ENCODE measurements at regions of chr3 and their contacts with region 1.

Region 1: GRCh38 chr3:153161138-153161713 is 800 bp upstream of the RAP2B start:
- DNase-seq: peak; percentile 100
- H3K4me3 ChIP-seq: peak overlapping the region; percentile 72
- H3K27ac ChIP-seq: peak overlapping the region; percentile 76
- H3K4me1 ChIP-seq: peaks cover 25% of the 10 kb centered on the region
- H3K27me3 ChIP-seq: no peaks in the 10 kb centered on the region
- CTCF ChIP-seq: no peak

Region 2: GRCh38 chr3:151638555-151639417 is 1522.4 kb before region 1 on chr3:
- CTCF ChIA-PET with region 1: no interaction called
- POLR2A ChIA-PET with region 1: no interaction called
- intact Hi-C with region 1: no loop called
- DNase-seq: no peak
- H3K4me3 ChIP-seq: no peak overlapping the region
- H3K27ac ChIP-seq: no peak overlapping the region
- H3K4me1 ChIP-seq: no peaks in the 10 kb centered on the region
- H3K27me3 ChIP-seq: no peaks in the 10 kb centered on the region
- CTCF ChIP-seq: no peak

Region 3: GRCh38 chr3:152843955-152844354 is 317.3 kb before region 1 on chr3:
- CTCF ChIA-PET with region 1: no interaction called
- POLR2A ChIA-PET with region 1: no interaction called
- intact Hi-C with region 1: no loop called
- DNase-seq: no peak
- H3K4me3 ChIP-seq: no peak overlapping the region
- H3K27ac ChIP-seq: no peak overlapping the region
- H3K4me1 ChIP-seq: no peaks in the 10 kb centered on the region
- H3K27me3 ChIP-seq: no peaks in the 10 kb centered on the region
- CTCF ChIP-seq: no peak

Region 4: GRCh38 chr3:153043729-153044328 is 117.4 kb before region 1 on chr3:
- CTCF ChIA-PET with region 1: interaction called, 13 read pairs
- POLR2A ChIA-PET with region 1: no interaction called
- intact Hi-C with region 1: loop called (anchors 1 kb)
- DNase-seq: no peak
- H3K4me3 ChIP-seq: peak overlapping the region; percentile 33
- H3K27ac ChIP-seq: no peak overlapping the region
- H3K4me1 ChIP-seq: no peaks in the 10 kb centered on the region
- H3K27me3 ChIP-seq: no peaks in the 10 kb centered on the region
- CTCF ChIP-seq: no peak

Region 5: GRCh38 chr3:153291056-153291685 is 129.9 kb after region 1 on chr3:
- CTCF ChIA-PET with region 1: no interaction called
- POLR2A ChIA-PET with region 1: no interaction called
- intact Hi-C with region 1: loop called (anchors 5 kb)
- DNase-seq: peak; percentile 28
- H3K4me3 ChIP-seq: no peak overlapping the region
- H3K27ac ChIP-seq: no peak overlapping the region
- H3K4me1 ChIP-seq: peaks cover 21% of the 10 kb centered on the region
- H3K27me3 ChIP-seq: no peaks in the 10 kb centered on the region
- CTCF ChIP-seq: peak; percentile 57

Region 6: DNA sequence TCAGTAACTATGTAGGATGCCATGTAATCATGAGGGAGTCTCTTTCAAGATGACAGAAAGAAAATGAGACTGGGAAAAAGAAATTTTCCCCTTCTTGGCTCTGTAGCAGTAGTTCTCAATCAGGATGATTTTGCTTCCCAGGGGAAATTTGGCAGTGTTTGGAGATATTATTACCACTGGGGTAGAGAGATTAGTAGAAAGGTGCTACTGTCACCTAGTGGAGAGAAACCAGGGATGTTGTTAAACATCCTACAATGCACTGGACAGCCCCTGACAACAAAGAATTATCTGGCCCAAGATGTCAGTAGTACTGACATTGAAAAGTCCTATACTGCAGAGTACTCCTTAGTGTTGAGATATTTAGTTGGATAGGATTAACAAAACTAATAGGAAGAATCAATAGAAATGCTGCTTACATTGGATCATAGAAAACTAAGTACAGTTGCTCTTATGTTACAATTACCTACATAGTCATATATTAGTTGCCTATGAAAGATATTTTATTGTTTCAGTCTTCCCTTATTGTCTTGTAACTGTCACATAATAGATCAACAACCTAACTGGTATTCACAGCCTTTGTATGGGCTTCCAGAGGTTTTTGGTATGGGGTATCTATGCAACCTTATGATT is 434.1 kb after region 1 on chr3:
- CTCF ChIA-PET with region 1: no interaction called
- POLR2A ChIA-PET with region 1: no interaction called
- intact Hi-C with region 1: loop called (anchors 1 kb)
- DNase-seq: peak; percentile 65
- H3K4me3 ChIP-seq: no peak overlapping the region
- H3K27ac ChIP-seq: no peak overlapping the region
- H3K4me1 ChIP-seq: peaks cover 7% of the 10 kb centered on the region
- H3K27me3 ChIP-seq: peaks cover 10% of the 10 kb centered on the region
- CTCF ChIP-seq: peak; percentile 63

Region 7: DNA sequence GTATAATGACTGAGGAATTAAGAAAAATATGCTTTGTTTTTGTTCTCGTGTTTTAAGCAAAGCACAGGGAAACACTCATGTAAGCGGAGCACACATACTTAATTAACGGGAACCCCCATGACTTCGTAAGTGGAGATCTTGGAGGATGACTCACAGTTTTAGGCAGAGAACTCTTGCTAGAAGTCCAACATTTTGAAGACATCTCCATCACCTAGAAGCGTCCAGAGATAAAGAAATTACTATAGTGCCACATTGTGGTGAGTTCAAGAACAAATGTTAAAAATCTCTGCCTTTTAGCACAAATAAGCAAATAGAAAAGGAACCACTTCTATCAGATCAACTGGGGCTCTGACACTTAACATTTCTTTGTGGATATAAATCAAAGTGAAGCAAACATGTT is 765.9 kb after region 1 on chr3:
- CTCF ChIA-PET with region 1: no interaction called
- POLR2A ChIA-PET with region 1: no interaction called
- intact Hi-C with region 1: loop called (anchors 5 kb)
- DNase-seq: peak; percentile 86
- H3K4me3 ChIP-seq: no peak overlapping the region
- H3K27ac ChIP-seq: no peak overlapping the region
- H3K4me1 ChIP-seq: no peaks in the 10 kb centered on the region
- H3K27me3 ChIP-seq: no peaks in the 10 kb centered on the region
- CTCF ChIP-seq: peak; percentile 55

Measured in A673 (cell line).